ENCODE measurements at regions of chr13 and their contacts with region 1.

Region 1: DNA sequence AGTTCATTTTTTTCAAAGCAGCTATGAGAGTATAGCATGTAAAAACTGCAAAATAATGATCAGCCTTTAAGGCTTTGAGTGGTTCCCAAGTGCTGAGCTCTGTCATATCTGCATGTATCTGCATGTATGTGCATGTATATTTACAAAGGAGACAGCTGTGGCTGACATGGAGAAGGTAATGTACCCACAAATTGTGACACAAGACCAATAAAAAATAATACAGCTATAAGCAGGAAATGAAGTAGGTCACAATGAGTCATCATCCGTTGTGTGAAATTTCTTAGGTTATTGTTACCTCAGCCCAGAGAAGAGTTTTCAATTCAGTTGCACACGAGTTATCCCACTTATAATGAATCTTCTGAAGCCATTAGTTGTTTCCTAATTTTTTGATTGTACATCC is 60.9 kb upstream of the MED4 start:
- H3K4me3 Mint-ChIP-seq: no peak overlapping the region
- H3K27ac Mint-ChIP-seq: peak overlapping the region; percentile 75
- H3K4me1 Mint-ChIP-seq: peaks cover 84% of the 10 kb centered on the region
- H3K27me3 Mint-ChIP-seq: no peaks in the 10 kb centered on the region

Region 2: GRCh38 chr13:48194379-48194754 is 38.5 kb after region 1 on chr13:
- intact Hi-C with region 1: loop called (anchors 5 kb)
- H3K4me3 Mint-ChIP-seq: peak overlapping the region; percentile 20
- H3K27ac Mint-ChIP-seq: peak overlapping the region; percentile 83
- H3K4me1 Mint-ChIP-seq: peaks cover 40% of the 10 kb centered on the region
- H3K27me3 Mint-ChIP-seq: no peaks in the 10 kb centered on the region

Region 3: DNA sequence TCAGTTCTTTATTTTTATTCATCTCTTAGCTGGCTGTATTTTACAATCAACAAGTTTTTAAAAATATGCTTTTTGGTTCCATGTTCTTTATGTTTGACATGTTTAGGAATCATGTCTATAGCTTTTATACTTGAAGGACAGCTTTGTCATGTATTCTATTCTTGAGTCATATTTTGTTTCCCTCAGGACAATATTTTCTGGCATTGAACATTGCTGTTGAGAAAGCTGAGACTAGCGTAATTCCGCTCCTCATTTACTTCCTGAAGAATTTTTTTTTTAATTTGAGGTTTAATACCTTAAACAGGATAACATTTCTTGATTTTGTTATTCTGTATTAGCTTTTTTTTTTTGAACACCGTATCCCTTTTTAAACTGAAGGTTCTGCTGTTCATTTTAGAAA is 200.9 kb after region 1 on chr13:
- intact Hi-C with region 1: no loop called
- H3K4me3 Mint-ChIP-seq: no peak overlapping the region
- H3K27ac Mint-ChIP-seq: no peak overlapping the region
- H3K4me1 Mint-ChIP-seq: peaks cover 14% of the 10 kb centered on the region
- H3K27me3 Mint-ChIP-seq: no peaks in the 10 kb centered on the region